A673 (cell line): ENCODE measurements at regions of chr21 and their contacts with region 1.

Region 1: GRCh38 chr21:26850108-26850643 is 5.0 kb upstream of the ADAMTS1 start:
- DNase-seq: peak; percentile 71
- H3K4me3 ChIP-seq: no peak overlapping the region
- H3K27ac ChIP-seq: no peak overlapping the region
- H3K4me1 ChIP-seq: peaks cover 6% of the 10 kb centered on the region
- H3K27me3 ChIP-seq: no peaks in the 10 kb centered on the region
- CTCF ChIP-seq: peak; percentile 66

Region 2: GRCh38 chr21:27564684-27565301 is 714.6 kb after region 1 on chr21:
- CTCF ChIA-PET with region 1: no interaction called
- POLR2A ChIA-PET with region 1: no interaction called
- intact Hi-C with region 1: loop called (anchors 1 kb)
- DNase-seq: peak; percentile 24
- H3K4me3 ChIP-seq: no peak overlapping the region
- H3K27ac ChIP-seq: no peak overlapping the region
- H3K4me1 ChIP-seq: no peaks in the 10 kb centered on the region
- H3K27me3 ChIP-seq: no peaks in the 10 kb centered on the region
- CTCF ChIP-seq: peak; percentile 66

Region 3: GRCh38 chr21:27700974-27701614 is 850.9 kb after region 1 on chr21:
- CTCF ChIA-PET with region 1: interaction called, 5 read pairs
- POLR2A ChIA-PET with region 1: no interaction called
- intact Hi-C with region 1: loop called (anchors 1 kb)
- DNase-seq: peak; percentile 84
- H3K4me3 ChIP-seq: no peak overlapping the region
- H3K27ac ChIP-seq: no peak overlapping the region
- H3K4me1 ChIP-seq: no peaks in the 10 kb centered on the region
- H3K27me3 ChIP-seq: no peaks in the 10 kb centered on the region
- CTCF ChIP-seq: peak; percentile 86

Region 4: DNA sequence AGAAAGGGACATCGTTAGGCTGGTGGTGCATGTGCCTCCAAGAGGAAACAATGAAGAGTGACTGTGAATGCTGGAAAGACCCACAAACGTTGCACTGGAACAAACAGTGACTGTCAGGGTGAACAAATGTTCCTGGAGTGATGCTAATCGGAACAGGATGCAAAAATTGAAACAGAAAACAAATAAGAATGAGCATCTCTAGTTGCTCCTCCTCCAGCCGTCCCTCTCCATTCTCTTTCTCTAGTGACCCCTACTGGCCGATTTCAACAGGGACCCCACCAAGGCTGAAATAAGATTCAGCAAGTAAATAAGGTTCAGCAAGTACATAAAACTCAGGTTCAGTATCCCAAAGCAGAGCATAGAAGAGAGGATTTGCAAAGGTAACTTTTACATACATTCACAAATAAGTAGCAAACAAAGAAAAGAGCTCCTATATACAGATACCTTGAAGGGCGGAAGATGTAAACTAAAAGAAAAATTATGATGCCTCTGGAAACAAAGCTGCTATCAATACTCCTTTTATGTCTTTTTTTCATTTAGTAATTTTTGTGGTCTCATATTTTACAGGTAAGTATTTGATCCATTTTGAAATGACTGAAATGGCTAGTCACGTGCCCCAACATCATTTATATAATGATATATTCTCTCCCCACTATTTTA is 952.8 kb after region 1 on chr21:
- CTCF ChIA-PET with region 1: no interaction called
- POLR2A ChIA-PET with region 1: no interaction called
- intact Hi-C with region 1: loop called (anchors 5 kb)
- DNase-seq: peak; percentile 52
- H3K4me3 ChIP-seq: no peak overlapping the region
- H3K27ac ChIP-seq: no peak overlapping the region
- H3K4me1 ChIP-seq: no peaks in the 10 kb centered on the region
- H3K27me3 ChIP-seq: peaks cover 4% of the 10 kb centered on the region
- CTCF ChIP-seq: peak; percentile 72

Region 5: DNA sequence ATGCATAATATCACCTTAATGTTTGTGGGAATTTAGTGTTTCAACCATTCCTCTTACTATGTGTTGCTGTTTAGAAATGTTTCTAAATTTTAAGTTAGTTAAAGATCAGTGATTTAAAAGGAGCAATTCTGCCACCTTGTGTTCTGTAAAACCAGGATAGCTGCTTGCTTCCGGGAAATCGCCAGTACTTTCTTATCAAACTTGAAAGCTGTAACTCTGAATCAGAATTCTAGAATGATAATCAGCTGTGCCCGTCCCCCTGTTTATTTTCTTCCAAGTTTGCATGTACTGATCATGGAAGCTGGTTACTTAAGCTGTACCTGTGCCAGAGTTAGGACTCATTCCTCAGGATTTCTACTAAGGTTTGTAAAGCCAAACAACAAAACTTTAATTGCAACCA is 1486.1 kb after region 1 on chr21:
- CTCF ChIA-PET with region 1: no interaction called
- POLR2A ChIA-PET with region 1: no interaction called
- intact Hi-C with region 1: loop called (anchors 2 kb)
- DNase-seq: peak; percentile 47
- H3K4me3 ChIP-seq: no peak overlapping the region
- H3K27ac ChIP-seq: no peak overlapping the region
- H3K4me1 ChIP-seq: peaks cover 3% of the 10 kb centered on the region
- H3K27me3 ChIP-seq: no peaks in the 10 kb centered on the region
- CTCF ChIP-seq: peak; percentile 57